Esophagus muscularis mucosa (tissue), 4 donors: ENCODE measurements at regions of chr18 and their contacts with region 1.

Region 1: DNA sequence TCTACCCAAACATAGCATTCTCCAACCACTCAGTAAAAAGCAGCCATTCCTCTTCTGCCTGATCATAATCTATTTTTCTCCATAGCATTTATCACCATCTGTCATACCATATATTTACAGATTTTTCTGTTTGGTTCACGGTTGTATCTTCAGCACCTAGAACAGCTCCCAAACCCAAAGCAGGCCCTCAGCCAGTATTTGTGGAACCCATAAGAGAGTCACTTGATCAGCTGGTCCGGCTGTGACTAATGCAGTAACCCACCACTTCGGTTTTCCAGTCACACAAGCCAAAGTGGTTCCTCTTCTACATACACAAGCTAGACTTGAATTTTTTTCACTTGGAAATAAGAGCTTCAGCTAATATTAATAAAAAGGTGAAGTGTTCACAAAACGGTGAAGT is 511.6 kb upstream of the CELF4 start:
- DNase-seq: no peak
- H3K4me3 ChIP-seq: no peak overlapping the region
- H3K27ac ChIP-seq: no peak overlapping the region
- H3K4me1 ChIP-seq: no peaks in the 10 kb centered on the region
- H3K27me3 ChIP-seq: no peaks in the 10 kb centered on the region
- CTCF ChIP-seq: no peak
- EP300 ChIP-seq: no peak
- POLR2A ChIP-seq: no peak

Region 2: DNA sequence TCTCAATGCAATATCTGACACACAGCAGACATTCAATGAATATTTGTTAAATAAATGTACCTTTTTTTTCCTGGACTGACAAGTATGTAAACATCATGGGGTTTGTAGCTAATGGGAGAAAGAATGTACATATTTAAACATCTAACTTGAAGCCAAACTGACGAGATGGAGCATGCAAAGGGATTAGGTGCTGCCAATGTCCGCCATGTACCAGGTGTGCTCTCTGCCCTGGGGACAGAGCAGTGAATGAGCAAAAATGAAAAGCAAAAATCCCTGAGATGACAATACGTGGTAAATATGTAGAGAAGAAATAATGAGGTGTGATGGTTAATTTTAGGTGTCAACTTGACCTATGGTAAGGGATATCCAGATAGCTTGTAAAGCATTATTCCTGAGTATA is 264.3 kb before region 1 on chr18:
- intact Hi-C with region 1: no loop called
- DNase-seq: no peak
- H3K4me3 ChIP-seq: no peak overlapping the region
- H3K27ac ChIP-seq: no peak overlapping the region
- H3K4me1 ChIP-seq: no peaks in the 10 kb centered on the region
- H3K27me3 ChIP-seq: no peaks in the 10 kb centered on the region
- CTCF ChIP-seq: no peak
- EP300 ChIP-seq: no peak
- POLR2A ChIP-seq: no peak

Region 3: GRCh38 chr18:37889963-37890362 is 187.3 kb before region 1 on chr18:
- intact Hi-C with region 1: loop called (anchors 10 kb)
- DNase-seq: no peak
- H3K4me3 ChIP-seq: no peak overlapping the region
- H3K27ac ChIP-seq: no peak overlapping the region
- H3K4me1 ChIP-seq: no peaks in the 10 kb centered on the region
- H3K27me3 ChIP-seq: no peaks in the 10 kb centered on the region
- CTCF ChIP-seq: no peak
- EP300 ChIP-seq: no peak
- POLR2A ChIP-seq: no peak

Region 4: DNA sequence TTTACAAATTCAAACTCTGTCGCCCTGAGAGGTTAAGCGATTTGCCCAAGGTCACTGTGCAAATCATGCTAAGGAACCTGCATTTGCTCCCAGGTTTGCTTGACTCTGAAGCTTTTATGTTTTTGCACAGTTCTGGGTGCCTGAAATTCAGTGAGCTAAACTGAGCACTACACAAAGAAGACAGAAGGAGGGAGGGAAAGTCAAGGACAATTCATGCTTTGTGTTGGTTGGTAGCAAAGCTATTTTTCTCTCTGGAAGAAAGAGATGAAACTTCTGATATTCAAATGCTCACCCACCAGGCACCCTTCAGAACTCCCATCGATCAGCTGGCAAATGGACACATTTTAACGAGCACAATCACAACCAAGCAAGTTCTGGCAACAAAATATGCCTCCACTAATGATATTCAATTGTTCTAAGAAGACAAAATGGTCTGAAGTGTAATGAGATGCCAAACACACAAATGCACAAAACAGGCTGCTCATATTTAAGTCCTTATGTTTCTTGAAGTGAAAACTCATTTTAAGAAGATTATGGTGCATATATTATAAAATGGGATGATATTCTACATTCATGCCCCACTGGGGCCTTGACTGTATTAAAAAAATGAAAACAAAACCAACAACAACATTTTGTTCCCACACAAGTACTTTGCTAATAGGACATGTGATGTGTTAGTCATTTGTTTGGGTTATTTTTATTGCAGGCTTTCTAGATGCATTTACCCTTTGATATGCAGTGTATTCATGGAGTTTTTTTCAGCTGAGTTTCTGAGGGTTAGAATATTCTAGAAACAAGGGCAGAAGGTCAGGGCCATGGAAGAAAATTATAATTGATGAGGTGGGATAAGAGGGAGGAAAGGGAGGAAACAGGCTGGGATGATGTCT is 66.0 kb before region 1 on chr18:
- intact Hi-C with region 1: no loop called
- DNase-seq: no peak
- H3K4me3 ChIP-seq: no peak overlapping the region
- H3K27ac ChIP-seq: no peak overlapping the region
- H3K4me1 ChIP-seq: peaks cover 0 to 22% (median 14%) of the 10 kb centered on the region in 4 donors
- H3K27me3 ChIP-seq: no peaks in the 10 kb centered on the region
- CTCF ChIP-seq: no peak
- EP300 ChIP-seq: no peak
- POLR2A ChIP-seq: no peak

Region 5: DNA sequence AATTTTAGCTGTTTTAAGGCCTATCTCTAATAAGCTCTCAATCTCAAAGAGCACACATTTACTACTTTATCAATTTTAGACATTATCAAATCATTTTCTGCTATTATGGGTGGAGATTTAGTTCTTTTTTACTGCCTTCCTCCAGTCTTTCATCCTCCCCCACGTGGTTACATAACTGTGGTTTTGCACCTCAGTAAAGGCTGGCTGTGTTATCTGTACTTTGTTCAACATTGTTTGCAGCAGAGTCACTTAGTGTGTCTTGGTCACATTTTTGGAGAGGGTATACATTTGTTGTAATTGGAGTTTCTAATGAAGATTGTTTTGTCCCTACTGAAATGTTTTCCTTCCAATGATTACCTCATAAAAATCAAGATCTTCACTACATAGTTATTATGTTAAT is 38.0 kb after region 1 on chr18:
- intact Hi-C with region 1: loop called (anchors 10 kb)
- DNase-seq: no peak
- H3K4me3 ChIP-seq: no peak overlapping the region
- H3K27ac ChIP-seq: no peak overlapping the region
- H3K4me1 ChIP-seq: no peaks in the 10 kb centered on the region
- H3K27me3 ChIP-seq: no peaks in the 10 kb centered on the region
- CTCF ChIP-seq: no peak
- EP300 ChIP-seq: no peak
- POLR2A ChIP-seq: no peak